GM13976 (cell line): ENCODE measurements at regions of chr2 and their contacts with region 1.

Region 1: DNA sequence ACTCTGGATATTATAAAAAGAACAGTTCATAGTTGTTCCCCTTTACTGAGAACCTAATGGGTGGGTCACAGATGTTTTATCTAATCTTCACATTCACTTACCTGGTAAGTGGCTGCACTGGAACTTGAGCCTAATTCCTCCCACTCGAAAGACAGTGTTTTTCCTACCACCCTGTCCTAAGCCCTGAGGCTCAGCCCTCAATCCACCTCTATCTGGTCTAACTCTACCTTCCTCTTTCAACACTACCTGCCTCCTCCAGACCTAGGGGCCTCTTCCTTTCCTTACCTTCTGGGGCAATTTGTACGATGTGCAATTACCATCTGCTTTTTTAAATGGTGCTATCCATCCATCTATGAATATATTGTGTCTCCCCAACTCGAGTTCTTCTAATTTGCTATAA is 9.7 kb upstream of the KIF3C start:
- DNase-seq: no peak
- CTCF ChIP-seq: no peak

Region 2: GRCh38 chr2:26144953-26145680 is 153.2 kb after region 1 on chr2:
- in situ Hi-C with region 1: loop called (anchors 10 kb)
- DNase-seq: peak; percentile 72
- CTCF ChIP-seq: peak; percentile 55